Transverse colon (tissue), 4 donors: ENCODE measurements at regions of chr11 and their contacts with region 1.

Region 1: GRCh38 chr11:8099291-8099899 is 18.4 kb downstream of the TUB start:
- DNase-seq: peak; percentile 82
- H3K4me3 ChIP-seq: no peak overlapping the region
- H3K27ac ChIP-seq: no peak overlapping the region
- H3K4me1 ChIP-seq: no peaks in the 10 kb centered on the region
- H3K27me3 ChIP-seq: no peaks in the 10 kb centered on the region
- CTCF ChIP-seq: peak; percentile 66 to 77 (median 74)
- EP300 ChIP-seq: no peak
- POLR2A ChIP-seq: no peak

Region 2: GRCh38 chr11:7892840-7893254 is 206.5 kb before region 1 on chr11:
- in situ Hi-C with region 1: loop called in 1 of 4 experiments (anchors 25 kb)
- intact Hi-C with region 1: no loop called
- DNase-seq: no peak
- H3K4me3 ChIP-seq: no peak overlapping the region
- H3K27ac ChIP-seq: peak overlapping the region; percentile 70 to 77 (median 72)
- H3K4me1 ChIP-seq: peaks cover 5 to 20% (median 7%) of the 10 kb centered on the region in 4 donors
- H3K27me3 ChIP-seq: peaks cover 16% of the 10 kb centered on the region
- CTCF ChIP-seq: peak; percentile 65 to 80 (median 71)
- EP300 ChIP-seq: no peak
- POLR2A ChIP-seq: no peak

Region 3: DNA sequence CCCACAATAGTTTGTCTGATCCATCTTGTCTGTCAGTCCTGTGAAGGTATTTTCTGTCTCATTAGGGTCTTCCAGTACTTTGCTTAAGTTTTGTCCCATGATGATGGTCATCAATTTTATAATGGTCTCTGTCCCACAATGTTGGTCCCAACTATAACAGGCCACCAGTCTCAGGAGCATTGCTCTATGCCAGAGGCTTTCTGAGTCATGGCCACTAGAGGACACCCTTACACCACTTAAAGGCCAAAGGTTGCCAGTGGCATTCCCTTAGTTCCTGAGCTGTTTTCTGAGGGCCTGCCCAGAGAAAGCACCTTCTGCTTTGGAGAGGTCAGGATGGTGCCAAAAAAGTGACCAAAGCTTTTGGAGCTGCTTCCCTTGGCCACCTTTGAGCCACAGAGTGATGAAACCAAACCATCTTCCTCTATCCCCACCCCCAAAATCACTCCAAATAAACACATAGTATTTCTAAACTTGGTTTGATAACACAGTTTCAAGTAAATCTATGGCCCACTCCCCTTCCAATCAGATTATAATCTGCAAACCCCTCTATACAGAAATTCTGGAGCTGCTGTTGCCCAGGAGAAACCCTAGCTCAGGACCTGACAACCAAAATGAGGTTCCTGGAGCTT is 92.9 kb before region 1 on chr11:
- in situ Hi-C with region 1: loop called in 3 of 4 experiments (anchors 10 kb)
- intact Hi-C with region 1: loop called (anchors 5 kb)
- DNase-seq: peak; percentile 54
- H3K4me3 ChIP-seq: no peak overlapping the region
- H3K27ac ChIP-seq: no peak overlapping the region
- H3K4me1 ChIP-seq: no peaks in the 10 kb centered on the region
- H3K27me3 ChIP-seq: no peaks in the 10 kb centered on the region
- CTCF ChIP-seq: peak; percentile 70 to 78 (median 74)
- EP300 ChIP-seq: no peak
- POLR2A ChIP-seq: no peak

Region 4: GRCh38 chr11:8033305-8034105 is 65.9 kb before region 1 on chr11:
- in situ Hi-C with region 1: loop called in 3 of 4 experiments (anchors 5 to 10 kb)
- intact Hi-C with region 1: loop called (anchors 5 kb)
- DNase-seq: peak; percentile 72
- H3K4me3 ChIP-seq: no peak overlapping the region
- H3K27ac ChIP-seq: no peak overlapping the region
- H3K4me1 ChIP-seq: peaks cover 0 to 8% (median 4%) of the 10 kb centered on the region in 4 donors
- H3K27me3 ChIP-seq: no peaks in the 10 kb centered on the region
- CTCF ChIP-seq: peak; percentile 71 to 88 (median 81)
- EP300 ChIP-seq: no peak
- POLR2A ChIP-seq: no peak

Region 5: DNA sequence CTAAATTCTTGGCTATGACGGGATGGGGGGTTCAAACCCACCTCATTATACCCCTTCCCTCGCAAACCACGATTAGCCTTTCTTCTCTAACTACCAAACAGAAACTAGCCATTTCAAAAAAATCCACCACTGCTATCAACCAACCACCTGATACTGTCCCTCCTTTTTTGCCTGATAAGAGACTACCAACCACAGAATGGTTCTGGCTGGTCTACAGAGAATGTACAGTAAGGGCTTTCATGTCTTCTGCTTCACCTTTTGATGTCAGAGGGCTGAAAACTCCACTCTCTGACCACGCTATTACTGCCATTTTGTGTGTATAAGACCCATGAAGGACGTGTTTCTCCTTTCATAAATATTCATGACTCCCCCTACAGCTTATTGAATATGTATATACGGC is 50.3 kb after region 1 on chr11:
- in situ Hi-C with region 1: no loop called
- intact Hi-C with region 1: no loop called
- DNase-seq: no peak
- H3K4me3 ChIP-seq: no peak overlapping the region
- H3K27ac ChIP-seq: no peak overlapping the region
- H3K4me1 ChIP-seq: no peaks in the 10 kb centered on the region
- H3K27me3 ChIP-seq: no peaks in the 10 kb centered on the region
- CTCF ChIP-seq: no peak
- EP300 ChIP-seq: no peak
- POLR2A ChIP-seq: no peak

Region 6: GRCh38 chr11:8168485-8169257 is 69.3 kb after region 1 on chr11 and contains the start of gene RIC3:
- in situ Hi-C with region 1: no loop called
- intact Hi-C with region 1: no loop called
- DNase-seq: peak; percentile 30
- H3K4me3 ChIP-seq: peak within 1 kb of the TSS; percentile 31 to 57 (median 44)
- H3K27ac ChIP-seq: peak within 1 kb of the TSS in 2 of 4 donors; percentile 25 to 27
- H3K4me1 ChIP-seq: peaks cover 0 to 4% (median 2%) of the 10 kb centered on the region in 4 donors
- H3K27me3 ChIP-seq: peaks cover 48% of the 10 kb centered on the region
- CTCF ChIP-seq: no peak
- EP300 ChIP-seq: no peak
- POLR2A ChIP-seq: no peak
- total RNA-seq, gene RIC3: 3.3 to 43.0 (median 12.5) TPM